ENCODE measurements at regions of chr3 and their contacts with region 1.

Region 1: DNA sequence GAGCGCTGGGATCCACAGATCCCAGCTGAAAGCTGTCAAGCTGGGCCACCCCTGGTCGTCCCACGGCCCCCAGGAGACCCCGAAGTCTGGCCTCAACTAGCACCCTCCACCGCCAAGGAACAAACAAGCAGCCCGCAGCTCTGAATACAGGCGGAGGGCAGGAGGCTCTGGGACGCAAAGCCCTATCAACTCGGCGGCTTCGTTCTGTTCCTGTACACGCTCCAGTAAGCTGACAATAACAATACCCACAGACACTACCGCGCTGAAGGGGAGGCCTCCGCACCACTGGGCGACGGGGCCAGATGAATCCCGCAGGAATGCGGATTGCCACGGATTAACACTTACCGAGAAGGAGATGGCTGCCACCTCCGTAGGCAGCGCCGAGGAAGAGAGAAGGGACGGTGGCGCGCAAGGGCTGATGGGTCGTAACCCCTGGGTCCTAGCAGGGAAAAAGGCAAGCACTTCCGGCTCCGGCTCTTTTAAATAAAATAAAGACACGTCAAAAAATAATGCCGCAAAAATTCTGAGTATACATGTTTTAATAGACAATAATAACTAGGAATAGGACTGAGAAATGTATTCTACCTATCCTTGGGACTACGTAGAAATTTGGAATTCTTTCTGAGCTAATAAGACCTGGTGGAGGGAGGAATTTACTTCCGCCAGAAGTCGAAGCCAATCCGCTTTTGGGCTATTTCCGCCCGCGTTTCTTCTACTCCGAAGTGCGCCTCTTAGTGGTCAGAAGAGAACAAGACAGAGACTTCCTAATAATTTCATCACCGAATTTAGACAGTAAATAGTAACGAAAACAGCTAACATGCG is at the start of gene RPL32:
- DNase-seq: peak; percentile 89
- H3K4me3 Mint-ChIP-seq: peak within 1 kb of the TSS; percentile 93
- H3K27ac Mint-ChIP-seq: peak within 1 kb of the TSS; percentile 98
- H3K4me1 Mint-ChIP-seq: peaks cover 41% of the 10 kb centered on the region
- H3K27me3 Mint-ChIP-seq: no peaks in the 10 kb centered on the region
- total RNA-seq, gene RPL32: 2,505 to 2,560 TPM

Region 2: GRCh38 chr3:12522721-12523120 is 318.6 kb before region 1 on chr3:
- CTCF ChIA-PET with region 1: no interaction called
- POLR2A ChIA-PET with region 1: no interaction called
- intact Hi-C with region 1: no loop called
- DNase-seq: no peak
- H3K4me3 Mint-ChIP-seq: no peak overlapping the region
- H3K27ac Mint-ChIP-seq: no peak overlapping the region
- H3K4me1 Mint-ChIP-seq: no peaks in the 10 kb centered on the region
- H3K27me3 Mint-ChIP-seq: no peaks in the 10 kb centered on the region

Region 3: GRCh38 chr3:12556671-12557472 is 284.5 kb before region 1 on chr3 and contains the start of gene MKRN2:
- CTCF ChIA-PET with region 1: no interaction called
- POLR2A ChIA-PET with region 1: no interaction called
- intact Hi-C with region 1: loop called (anchors 2 kb)
- DNase-seq: peak; percentile 89
- H3K4me3 Mint-ChIP-seq: peak within 1 kb of the TSS; percentile 78
- H3K27ac Mint-ChIP-seq: peak within 1 kb of the TSS; percentile 91
- H3K4me1 Mint-ChIP-seq: peaks cover 57% of the 10 kb centered on the region
- H3K27me3 Mint-ChIP-seq: peaks cover 26% of the 10 kb centered on the region
- total RNA-seq, gene MKRN2: 28.5 to 30.1 TPM

Region 4: GRCh38 chr3:12706504-12707253 is 134.7 kb before region 1 on chr3:
- CTCF ChIA-PET with region 1: interaction called, 11 read pairs
- POLR2A ChIA-PET with region 1: no interaction called
- intact Hi-C with region 1: no loop called
- DNase-seq: peak; percentile 75
- H3K4me3 Mint-ChIP-seq: no peak overlapping the region
- H3K27ac Mint-ChIP-seq: no peak overlapping the region
- H3K4me1 Mint-ChIP-seq: no peaks in the 10 kb centered on the region
- H3K27me3 Mint-ChIP-seq: no peaks in the 10 kb centered on the region

Region 5: DNA sequence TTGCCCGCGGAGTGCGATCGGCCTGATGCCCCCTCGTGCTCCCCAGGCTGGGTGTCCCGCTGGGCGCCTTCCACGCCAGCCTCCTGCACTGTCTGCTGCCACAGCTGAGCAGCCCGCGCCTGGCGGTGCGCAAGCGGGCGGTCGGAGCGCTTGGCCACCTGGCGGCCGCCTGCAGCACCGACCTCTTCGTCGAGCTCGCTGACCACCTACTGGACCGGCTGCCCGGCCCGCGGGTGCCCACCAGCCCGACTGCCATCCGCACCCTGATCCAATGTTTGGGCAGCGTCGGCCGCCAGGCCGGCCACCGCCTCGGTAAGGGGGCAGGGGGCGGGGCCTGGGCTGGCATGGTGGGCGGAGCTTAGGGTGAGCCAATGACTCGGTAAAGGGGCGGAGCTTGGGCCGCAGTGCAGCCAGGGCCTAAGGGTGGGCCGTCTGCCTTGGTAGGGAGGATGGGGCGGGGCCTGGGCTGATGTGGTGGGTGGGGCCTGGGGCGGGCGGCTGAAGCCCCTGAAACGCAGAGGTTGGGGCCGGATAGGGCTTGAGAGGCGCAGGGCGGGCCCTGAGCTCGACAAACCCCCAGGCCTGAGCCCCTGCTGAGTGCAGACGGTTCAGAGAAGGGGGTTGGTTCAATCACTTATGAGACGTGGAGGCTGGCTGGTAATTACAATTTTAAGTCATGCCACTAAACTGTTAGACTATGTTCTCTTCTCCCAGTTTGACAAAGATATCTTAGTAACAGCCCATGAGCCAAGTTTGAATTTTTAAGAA is 31.2 kb before region 1 on chr3:
- CTCF ChIA-PET with region 1: interaction called, 42 read pairs
- POLR2A ChIA-PET with region 1: interaction called, 10 read pairs
- intact Hi-C with region 1: loop called (anchors 1 kb)
- DNase-seq: peak; percentile 94
- H3K4me3 Mint-ChIP-seq: peak overlapping the region; percentile 52
- H3K27ac Mint-ChIP-seq: no peak overlapping the region
- H3K4me1 Mint-ChIP-seq: peaks cover 3% of the 10 kb centered on the region
- H3K27me3 Mint-ChIP-seq: no peaks in the 10 kb centered on the region

Region 6: DNA sequence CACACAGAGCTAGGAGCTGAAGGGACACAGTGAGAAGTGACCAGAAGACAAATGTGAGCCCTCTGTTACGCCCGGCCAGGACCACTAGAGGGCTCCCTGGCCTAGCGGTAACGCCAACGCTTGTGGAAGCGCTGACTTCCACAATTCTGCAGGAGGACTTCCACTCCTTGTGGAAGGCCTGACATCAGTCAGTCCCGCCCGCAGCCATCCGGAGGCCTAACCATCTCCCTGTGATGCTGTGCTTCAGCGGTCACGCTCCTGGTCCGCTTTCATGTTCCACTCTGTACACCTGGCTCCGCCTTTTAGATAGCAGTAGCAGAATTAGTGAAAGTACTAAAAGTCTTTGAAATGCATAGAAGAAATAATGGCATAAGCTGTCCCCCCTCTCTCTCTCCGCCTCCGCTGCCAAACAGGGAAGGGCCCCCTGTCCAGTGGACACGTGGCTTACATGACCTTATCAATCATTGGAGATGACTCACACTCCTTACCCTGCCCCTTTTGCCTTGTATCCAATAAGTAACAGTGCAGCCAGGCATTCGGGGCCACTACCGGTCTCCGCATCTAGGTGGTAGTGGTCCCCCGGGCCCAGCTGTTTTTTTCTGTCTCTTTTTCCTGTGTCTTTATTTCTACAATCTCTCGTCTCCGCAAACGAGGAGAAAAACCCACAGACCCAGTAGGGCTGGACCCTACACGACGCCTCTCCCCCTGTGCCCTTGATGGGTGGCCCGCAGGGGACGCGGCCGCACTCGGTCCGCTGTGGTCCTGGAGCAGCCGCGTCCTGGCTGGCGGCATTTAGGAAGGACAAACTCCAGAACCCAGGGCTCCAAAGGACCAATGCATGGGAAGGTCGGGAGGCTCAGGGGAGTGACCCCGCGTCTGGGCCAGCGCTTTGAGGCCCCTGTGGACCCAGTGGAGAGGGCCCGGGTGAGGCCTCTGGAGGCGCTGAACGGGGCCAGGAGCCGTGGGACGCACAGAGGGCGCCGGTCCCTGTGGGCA is 27.0 kb after region 1 on chr3:
- CTCF ChIA-PET with region 1: interaction called, 19 read pairs
- POLR2A ChIA-PET with region 1: interaction called, 3 read pairs
- intact Hi-C with region 1: loop called (anchors 2 kb)
- DNase-seq: peak; percentile 78
- H3K4me3 Mint-ChIP-seq: peak overlapping the region; percentile 72
- H3K27ac Mint-ChIP-seq: no peak overlapping the region
- H3K4me1 Mint-ChIP-seq: peaks cover 13% of the 10 kb centered on the region
- H3K27me3 Mint-ChIP-seq: peaks cover 19% of the 10 kb centered on the region

Region 7: DNA sequence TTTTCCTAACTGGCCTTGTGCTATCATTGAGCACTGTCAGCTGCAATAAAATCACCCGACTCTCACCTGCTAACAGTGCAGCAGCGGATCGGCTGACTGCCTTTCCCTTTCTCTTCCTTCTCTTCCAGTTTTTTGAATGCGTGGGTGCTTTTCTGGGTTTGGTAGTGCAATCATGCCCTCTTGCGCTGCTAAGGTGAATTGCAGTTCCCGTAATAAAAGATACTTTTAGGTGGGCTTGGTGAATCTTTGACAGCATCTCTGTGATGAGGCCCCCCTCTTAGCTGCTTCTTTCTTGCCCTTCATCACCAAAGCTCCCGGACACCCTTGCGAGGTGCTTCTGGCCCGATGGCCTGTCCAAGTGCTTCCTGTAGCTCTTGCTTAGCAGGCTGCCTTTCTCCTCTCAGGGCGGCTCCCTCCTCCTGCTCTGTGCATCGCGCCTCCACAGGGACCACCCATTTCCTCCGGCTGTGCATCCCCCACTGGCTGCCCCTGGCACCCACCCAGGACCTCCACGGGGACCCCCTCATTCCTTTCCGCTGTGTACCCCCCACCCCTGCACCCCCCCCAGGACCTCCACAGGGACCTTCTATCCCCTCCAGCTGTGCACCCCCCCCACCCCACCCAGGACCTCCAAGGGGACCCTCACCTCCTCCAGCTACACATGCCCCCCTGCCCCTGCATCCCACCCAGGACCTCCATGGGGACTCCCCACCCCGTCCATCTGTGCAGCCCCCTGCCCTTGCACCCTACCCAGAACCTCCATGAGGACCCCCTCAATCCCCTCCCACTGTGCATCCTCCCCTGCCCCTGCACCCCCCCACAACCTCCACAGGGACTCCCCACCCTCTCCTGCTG is 50.9 kb after region 1 on chr3:
- CTCF ChIA-PET with region 1: interaction called, 14 read pairs
- POLR2A ChIA-PET with region 1: no interaction called
- intact Hi-C with region 1: loop called (anchors 2 kb)
- DNase-seq: peak; percentile 63
- H3K4me3 Mint-ChIP-seq: no peak overlapping the region
- H3K27ac Mint-ChIP-seq: no peak overlapping the region
- H3K4me1 Mint-ChIP-seq: peaks cover 12% of the 10 kb centered on the region
- H3K27me3 Mint-ChIP-seq: peaks cover 10% of the 10 kb centered on the region

Region 8: DNA sequence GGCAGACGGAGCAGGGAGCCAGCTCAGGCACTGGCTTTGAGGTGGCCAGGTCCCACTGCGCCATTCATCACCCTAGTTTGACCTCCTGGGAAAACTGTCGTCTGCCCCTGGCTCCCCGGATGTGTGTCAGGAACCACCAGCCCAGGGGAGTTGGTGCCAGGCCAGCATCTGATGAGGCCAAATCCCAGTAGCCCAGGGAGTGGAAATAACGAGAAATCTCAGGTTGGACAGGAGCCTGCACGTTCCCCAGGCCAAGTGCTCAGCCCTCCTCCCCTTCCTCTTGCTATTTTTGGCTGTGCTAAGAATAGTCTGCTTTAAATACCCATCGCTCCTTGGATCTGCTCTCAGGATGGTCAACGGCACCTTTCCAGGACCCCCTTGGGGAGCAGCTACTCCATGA is 93.1 kb after region 1 on chr3:
- CTCF ChIA-PET with region 1: no interaction called
- POLR2A ChIA-PET with region 1: no interaction called
- intact Hi-C with region 1: no loop called
- DNase-seq: no peak
- H3K4me3 Mint-ChIP-seq: no peak overlapping the region
- H3K27ac Mint-ChIP-seq: no peak overlapping the region
- H3K4me1 Mint-ChIP-seq: peaks cover 7% of the 10 kb centered on the region
- H3K27me3 Mint-ChIP-seq: no peaks in the 10 kb centered on the region

Measured in activated CD4-positive, alpha-beta memory T cell treated with anti-CD3 and anti-CD28 coated beads for 36 hours (primary cell).